Mammary epithelial cell (primary cell): ENCODE measurements at regions of chr13 and their contacts with region 1.

Region 1: GRCh38 chr13:24557081-24557480 is 44.5 kb upstream of the PARP4 start:
- DNase-seq: no peak
- H3K4me3 ChIP-seq: no peak overlapping the region
- H3K27ac ChIP-seq: no peak overlapping the region
- H3K4me1 ChIP-seq: no peaks in the 10 kb centered on the region
- H3K27me3 ChIP-seq: no peaks in the 10 kb centered on the region
- CTCF ChIP-seq: no peak

Region 2: GRCh38 chr13:24328145-24328544 is 228.9 kb before region 1 on chr13:
- CTCF ChIA-PET with region 1: no interaction called
- dilution Hi-C with region 1: no loop called
- in situ Hi-C with region 1: loop called in 1 of 2 experiments (anchors 10 kb)
- intact Hi-C with region 1: loop called (anchors 5 kb)
- DNase-seq: no peak
- H3K4me3 ChIP-seq: no peak overlapping the region
- H3K27ac ChIP-seq: no peak overlapping the region
- H3K4me1 ChIP-seq: no peaks in the 10 kb centered on the region
- H3K27me3 ChIP-seq: no peaks in the 10 kb centered on the region
- CTCF ChIP-seq: no peak

Region 3: DNA sequence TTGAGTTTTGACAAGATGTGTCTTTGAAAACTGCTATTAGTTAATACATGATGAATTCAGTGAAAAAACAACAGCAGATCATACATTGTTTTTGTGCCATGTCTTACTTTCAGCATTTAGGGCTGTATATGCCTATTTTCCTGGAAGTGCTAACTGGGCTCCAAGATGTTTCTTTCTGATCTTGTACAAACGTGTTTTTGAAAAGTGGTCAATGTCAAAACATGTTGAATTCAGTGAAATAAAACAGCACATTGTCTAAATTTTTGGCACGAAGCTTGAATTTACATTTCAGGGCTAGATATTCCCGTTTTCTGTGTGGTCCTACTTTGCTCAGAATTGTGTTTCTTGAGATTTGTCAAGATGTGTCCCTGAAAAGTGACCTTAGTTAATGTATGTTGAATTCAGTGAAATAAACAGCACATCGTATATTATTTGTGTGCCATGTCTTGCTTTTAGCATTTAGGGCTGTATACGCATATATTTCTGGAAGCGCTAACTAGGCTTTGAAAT is 29.8 kb before region 1 on chr13:
- CTCF ChIA-PET with region 1: no interaction called
- dilution Hi-C with region 1: no loop called
- in situ Hi-C with region 1: no loop called
- intact Hi-C with region 1: no loop called
- DNase-seq: no peak
- H3K4me3 ChIP-seq: no peak overlapping the region
- H3K27ac ChIP-seq: no peak overlapping the region
- H3K4me1 ChIP-seq: no peaks in the 10 kb centered on the region
- H3K27me3 ChIP-seq: no peaks in the 10 kb centered on the region
- CTCF ChIP-seq: no peak